Activated naive CD8-positive, alpha-beta T cell treated with anti-CD3 and anti-CD28 coated beads, Interleukin-2, amount 10 ng/mL, durations not matched to agents 7 days and 5 days (primary cell): ENCODE measurements at regions of chr12 and their contacts with region 1.

Region 1: DNA sequence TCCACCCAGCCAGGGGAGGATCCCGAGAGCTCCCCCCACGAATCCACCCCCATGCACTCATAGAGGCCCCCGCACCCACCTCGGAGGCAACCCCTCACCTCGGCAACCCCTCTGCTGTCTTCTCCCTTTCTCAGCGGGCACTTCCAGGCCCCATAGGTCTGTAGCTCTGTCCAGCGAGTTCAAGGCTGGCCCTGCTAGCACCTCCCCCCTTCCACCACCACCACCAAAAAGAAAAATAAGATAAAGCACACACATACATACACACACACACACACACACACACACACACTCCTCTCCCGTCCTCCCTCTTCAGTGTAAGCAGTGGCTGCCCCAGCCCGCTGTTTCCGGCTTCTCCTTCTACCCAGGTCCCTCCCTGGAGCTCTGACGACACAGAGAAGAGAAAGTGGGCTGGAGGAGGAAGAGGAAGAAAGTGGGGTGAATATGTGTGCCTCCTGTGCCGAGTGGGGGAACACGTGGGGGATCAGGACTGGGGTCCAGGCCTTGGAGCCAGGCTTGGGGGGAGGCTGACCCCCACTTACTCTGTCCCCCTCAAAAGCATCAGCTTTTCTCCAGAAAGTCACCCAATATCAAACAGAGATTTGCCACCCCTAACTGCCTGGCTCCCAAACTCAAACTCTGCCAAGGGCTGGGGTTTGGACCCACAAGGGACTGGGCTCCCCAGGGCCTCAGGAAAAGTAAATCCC is at the start of gene STAT6:
- DNase-seq: peak; percentile 78
- ATAC-seq: peak; percentile 74
- H3K4me3 Mint-ChIP-seq: peak within 1 kb of the TSS; percentile 94
- H3K27ac Mint-ChIP-seq: peak within 1 kb of the TSS; percentile 97
- H3K4me1 Mint-ChIP-seq: peaks cover 37% of the 10 kb centered on the region
- H3K27me3 Mint-ChIP-seq: no peaks in the 10 kb centered on the region
- total RNA-seq, gene STAT6: 251 to 263 TPM

Region 2: DNA sequence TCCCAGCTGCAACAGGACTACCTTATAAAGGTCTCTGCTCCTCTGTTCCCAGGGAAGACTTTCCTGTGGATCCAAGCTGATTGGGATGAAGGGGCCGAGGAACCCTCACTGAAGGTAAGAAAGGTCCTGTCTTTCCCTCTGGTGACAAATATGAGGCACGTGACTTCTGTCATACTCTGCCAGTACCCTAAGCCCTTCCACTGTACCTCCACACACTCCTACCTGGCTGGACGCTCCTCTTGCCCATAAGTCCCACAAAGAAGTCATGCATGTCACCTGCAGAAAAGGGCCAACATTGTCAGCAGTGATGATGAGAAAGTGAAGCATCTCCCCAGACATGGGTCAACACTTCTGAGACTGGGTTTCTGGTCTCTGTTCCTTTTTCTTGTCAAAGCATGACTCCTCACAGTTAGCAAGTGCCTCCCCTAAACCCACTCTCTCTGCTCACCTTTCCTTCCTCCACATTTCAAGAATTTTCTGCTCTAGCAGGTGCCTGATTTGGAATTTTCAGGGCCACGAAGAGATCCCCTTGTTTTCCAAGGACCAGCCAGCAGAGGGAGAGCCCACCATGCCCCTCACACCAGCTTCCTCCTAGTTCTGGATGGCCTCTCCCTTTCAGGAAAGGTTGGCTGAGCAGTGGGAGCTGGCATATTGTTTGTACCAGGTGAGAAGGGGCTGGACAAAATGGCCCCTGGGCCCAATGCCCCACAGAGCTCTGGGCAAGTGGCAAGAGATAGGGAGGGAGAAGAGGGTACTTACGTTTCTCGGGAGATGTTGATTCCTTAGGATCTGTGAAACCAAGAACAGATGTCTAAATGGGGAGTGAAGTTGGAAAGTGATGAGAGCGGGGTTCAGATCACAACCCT is 98.3 kb before region 1 on chr12:
- POLR2A ChIA-PET with region 1: interaction called, 37 read pairs
- DNase-seq: no peak
- ATAC-seq: no peak
- H3K4me3 Mint-ChIP-seq: no peak overlapping the region
- H3K27ac Mint-ChIP-seq: peak overlapping the region; percentile 40
- H3K4me1 Mint-ChIP-seq: peaks cover 33% of the 10 kb centered on the region
- H3K27me3 Mint-ChIP-seq: peaks cover 13% of the 10 kb centered on the region

Region 3: GRCh38 chr12:57069523-57069922 is 41.7 kb before region 1 on chr12:
- POLR2A ChIA-PET with region 1: interaction called, 122 read pairs
- DNase-seq: no peak
- ATAC-seq: peak; percentile 96
- H3K4me3 Mint-ChIP-seq: peak overlapping the region; percentile 28
- H3K27ac Mint-ChIP-seq: peak overlapping the region; percentile 85
- H3K4me1 Mint-ChIP-seq: peaks cover 39% of the 10 kb centered on the region
- H3K27me3 Mint-ChIP-seq: no peaks in the 10 kb centered on the region

Region 4: DNA sequence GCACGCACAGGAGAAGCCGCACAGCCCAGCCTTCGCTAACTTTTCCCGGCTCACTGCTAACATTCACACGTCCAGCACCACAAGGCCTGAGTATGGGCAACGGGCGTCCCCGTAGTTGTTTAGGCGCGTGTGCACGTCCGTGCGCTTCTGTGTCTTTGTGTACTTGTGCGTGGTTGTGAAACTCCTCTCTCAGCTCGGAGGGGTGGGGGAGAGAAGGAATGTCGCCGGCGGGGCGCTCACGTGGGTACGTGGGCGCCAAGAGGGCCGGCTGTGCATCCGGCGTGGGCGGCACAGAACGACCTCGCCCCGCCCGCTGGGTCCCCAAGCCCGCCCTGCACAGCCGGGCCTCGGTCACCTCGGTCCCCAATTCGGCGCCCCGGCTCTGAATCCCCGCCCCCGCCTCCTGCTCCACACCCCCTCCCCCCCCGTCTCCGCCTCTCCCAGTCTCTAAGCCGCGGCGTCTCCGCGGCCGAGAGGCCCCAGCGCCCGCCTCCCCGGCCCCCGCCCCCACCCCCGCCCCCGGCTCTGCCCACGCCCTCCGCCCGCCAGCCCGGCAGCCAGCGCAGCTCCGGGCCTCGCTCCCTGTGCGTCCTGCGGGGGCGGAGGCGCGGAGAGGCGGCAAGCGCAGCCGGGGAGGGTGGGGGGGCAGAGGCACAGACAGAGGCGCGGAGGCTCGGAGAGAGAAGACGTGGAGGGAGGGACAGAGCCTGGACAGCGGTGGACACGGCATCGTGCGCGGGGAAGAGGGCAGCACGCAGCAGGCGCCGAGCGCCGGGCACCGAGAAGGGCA is 22.5 kb before region 1 on chr12 and contains the start of gene NAB2:
- POLR2A ChIA-PET with region 1: interaction called, 166 read pairs
- DNase-seq: peak; percentile 94
- ATAC-seq: peak; percentile 73
- H3K4me3 Mint-ChIP-seq: peak within 1 kb of the TSS; percentile 96
- H3K27ac Mint-ChIP-seq: peak within 1 kb of the TSS; percentile 89
- H3K4me1 Mint-ChIP-seq: peaks cover 52% of the 10 kb centered on the region
- H3K27me3 Mint-ChIP-seq: no peaks in the 10 kb centered on the region
- total RNA-seq, gene NAB2: 13.1 to 16.1 TPM

Region 5: DNA sequence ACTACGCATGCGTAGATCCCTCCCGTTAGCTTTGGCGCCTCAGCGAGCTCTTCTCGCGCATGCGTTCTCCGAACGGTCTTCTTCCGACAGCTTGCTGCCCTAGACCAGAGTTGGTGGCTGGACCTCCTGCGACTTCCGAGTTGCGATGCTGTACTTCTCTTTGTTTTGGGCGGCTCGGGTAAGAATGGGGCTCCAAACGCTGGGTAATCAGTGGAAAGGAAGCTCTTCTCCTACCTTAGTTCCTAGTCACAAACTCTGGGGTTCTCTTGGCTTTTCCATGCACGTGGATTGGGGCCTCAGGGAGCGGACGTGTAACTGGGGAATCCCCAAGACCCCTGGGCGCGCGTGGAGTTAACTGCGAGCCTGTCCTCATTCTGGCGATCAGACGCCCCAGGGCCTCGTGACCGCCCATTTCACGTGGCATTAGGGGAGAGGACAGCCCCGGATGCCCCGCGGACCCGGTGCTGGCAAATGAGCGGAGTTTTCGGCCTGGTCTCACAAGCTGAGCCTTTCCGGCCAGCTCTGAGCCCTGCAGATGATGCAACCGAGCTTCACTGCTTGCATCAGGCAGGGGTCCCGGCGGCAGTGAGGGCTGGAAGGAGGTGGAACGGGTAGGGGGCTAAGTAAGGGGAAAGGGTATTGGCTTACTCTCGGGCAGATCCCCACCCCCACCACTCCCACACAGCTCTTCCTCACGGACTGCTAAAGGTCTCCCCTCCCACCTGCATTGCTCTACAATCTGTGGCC is 118.6 kb after region 1 on chr12 and contains the start of gene SHMT2:
- POLR2A ChIA-PET with region 1: interaction called, 12 read pairs
- DNase-seq: peak; percentile 86
- ATAC-seq: peak; percentile 65
- H3K4me3 Mint-ChIP-seq: peak within 1 kb of the TSS; percentile 95
- H3K27ac Mint-ChIP-seq: peak within 1 kb of the TSS; percentile 91
- H3K4me1 Mint-ChIP-seq: peaks cover 47% of the 10 kb centered on the region
- H3K27me3 Mint-ChIP-seq: peaks cover 21% of the 10 kb centered on the region
- total RNA-seq, gene SHMT2: 142 to 159 TPM

Region 6: GRCh38 chr12:57475271-57476161 is 364.3 kb after region 1 on chr12:
- POLR2A ChIA-PET with region 1: no interaction called
- DNase-seq: no peak
- ATAC-seq: no peak
- H3K4me3 Mint-ChIP-seq: peak overlapping the region; percentile 96
- H3K27ac Mint-ChIP-seq: peak overlapping the region; percentile 99
- H3K4me1 Mint-ChIP-seq: peaks cover 47% of the 10 kb centered on the region
- H3K27me3 Mint-ChIP-seq: no peaks in the 10 kb centered on the region